Sciatic nerve (tissue), 2 donors: ENCODE measurements at regions of chr19 and their contacts with region 1.

Region 1: DNA sequence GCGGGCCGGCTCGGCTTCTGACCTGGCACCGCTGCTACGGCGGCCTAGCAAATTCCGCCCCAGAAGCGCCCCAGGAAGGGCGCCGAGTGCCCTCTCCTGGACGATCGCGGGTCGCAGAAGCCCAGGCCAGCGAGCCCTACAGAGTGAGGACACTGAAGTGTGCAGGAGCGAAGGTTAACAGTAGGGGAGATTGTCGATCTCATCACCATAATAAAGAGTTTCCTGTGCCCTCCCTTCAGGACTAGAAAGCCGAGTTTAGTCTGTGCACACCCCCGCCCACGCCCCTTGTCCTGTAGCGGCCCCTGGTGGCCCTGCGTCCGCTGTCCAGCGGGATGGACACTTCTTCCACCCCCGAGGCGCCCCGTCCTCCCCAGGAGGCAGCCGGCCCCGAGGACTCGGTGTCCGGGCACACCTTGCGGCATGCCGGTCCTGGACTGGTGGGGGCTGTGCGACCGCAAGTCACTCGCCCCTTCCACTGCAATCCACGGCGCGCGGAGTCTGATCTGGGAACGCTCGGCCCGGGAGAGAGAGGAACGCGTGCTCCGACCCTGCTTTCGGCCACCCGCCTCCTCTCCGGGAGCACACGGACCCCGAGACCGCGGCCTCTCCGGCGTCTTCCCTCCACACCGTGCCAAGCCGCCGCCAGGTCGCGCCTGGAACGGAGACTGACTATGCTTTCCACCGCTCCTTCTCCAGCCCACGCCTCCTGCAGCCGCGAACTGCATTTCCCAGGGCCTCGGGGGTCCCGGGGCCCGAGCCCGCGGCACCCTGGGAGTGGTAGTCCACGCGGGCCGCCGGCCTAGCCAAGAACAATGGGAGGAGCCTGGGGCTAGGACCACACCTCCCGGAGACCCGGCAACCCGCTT is 769 bp upstream of the KMT2B start:
- DNase-seq: peak; percentile 96
- ATAC-seq: peak; percentile 95

Region 2: GRCh38 chr19:34677386-34678084 is 1039.5 kb before region 1 on chr19 and contains the start of gene ZNF302:
- intact Hi-C with region 1: no loop called
- DNase-seq: peak; percentile 98
- ATAC-seq: peak; percentile 100
- total RNA-seq, gene ZNF302: 46.3 TPM

Region 3: DNA sequence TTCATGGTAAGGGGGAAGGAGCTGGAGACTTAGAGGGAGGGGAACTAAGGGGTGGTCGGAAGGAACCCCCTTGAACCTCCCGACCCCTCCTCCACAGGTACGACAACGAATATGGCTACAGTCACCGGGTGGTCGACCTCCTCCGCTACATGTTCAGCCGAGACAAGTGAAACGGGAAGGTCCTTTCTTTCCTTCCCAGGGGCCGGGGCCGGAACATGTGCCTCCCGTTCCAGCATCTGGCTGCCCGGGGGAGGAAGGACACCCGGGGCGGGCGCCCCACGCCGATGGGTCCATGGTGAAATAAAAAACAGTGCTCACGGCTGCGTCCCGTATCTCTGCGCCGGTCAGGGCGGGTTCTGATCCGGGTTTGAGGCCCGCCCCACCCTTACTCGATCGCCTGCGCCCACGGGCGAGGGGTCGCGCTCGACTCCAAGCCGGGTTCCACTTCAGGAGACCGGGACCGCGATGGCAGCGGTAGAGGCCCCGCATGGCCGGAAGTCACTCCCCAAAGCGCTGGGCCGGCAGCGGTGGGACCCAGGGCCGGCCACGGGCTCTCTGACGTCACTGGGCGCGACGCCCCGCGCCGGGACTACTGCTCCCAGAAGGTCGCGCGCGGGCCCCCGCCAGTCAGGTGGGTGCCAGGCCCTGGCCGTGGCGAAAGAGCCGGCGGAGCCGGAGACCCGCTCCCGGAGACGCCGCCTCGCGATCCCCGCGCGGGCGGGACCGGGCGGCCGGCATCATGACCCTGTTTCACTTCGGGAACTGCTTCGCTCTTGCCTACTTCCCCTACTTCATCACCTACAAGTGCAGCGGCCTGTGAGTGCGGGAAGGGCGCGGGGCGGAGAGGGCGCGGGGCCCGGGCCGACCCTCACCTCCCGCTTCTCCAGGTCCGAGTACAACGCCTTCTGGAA is 171.8 kb before region 1 on chr19 and contains the start of gene TMEM147:
- intact Hi-C with region 1: loop called (anchors 5 kb)
- DNase-seq: peak; percentile 95
- ATAC-seq: peak; percentile 99
- total RNA-seq, gene TMEM147: 53.9 TPM